ENCODE measurements at regions of chr1 and their contacts with region 1.

Region 1: GRCh38 chr1:89757532-89757931 is 63.3 kb upstream of the LRRC8D start:
- DNase-seq: peak in 3 of 5 donors; percentile 31 to 59 (median 50)
- H3K4me3 ChIP-seq: peak overlapping the region; percentile 12
- H3K4me3 Mint-ChIP-seq: peak overlapping the region; percentile 42 to 83 (median 79)
- H3K27ac ChIP-seq: no peak overlapping the region
- H3K27ac Mint-ChIP-seq: peak overlapping the region; percentile 76 to 99 (median 91)
- H3K4me1 ChIP-seq: peaks cover 81% of the 10 kb centered on the region
- H3K4me1 Mint-ChIP-seq: peaks cover 82 to 90% (median 89%) of the 10 kb centered on the region in 3 donors
- H3K27me3 ChIP-seq: no peaks in the 10 kb centered on the region
- H3K27me3 Mint-ChIP-seq: no peaks in the 10 kb centered on the region

Region 2: GRCh38 chr1:89574621-89575020 is 182.9 kb before region 1 on chr1:
- CTCF ChIA-PET with region 1: no interaction called
- POLR2A ChIA-PET with region 1: no interaction called
- DNase-seq: no peak
- H3K4me3 ChIP-seq: no peak overlapping the region
- H3K4me3 Mint-ChIP-seq: no peak overlapping the region
- H3K27ac ChIP-seq: no peak overlapping the region
- H3K27ac Mint-ChIP-seq: no peak overlapping the region
- H3K4me1 ChIP-seq: no peaks in the 10 kb centered on the region
- H3K4me1 Mint-ChIP-seq: peaks cover 2 to 9% (median 6%) of the 10 kb centered on the region in 3 donors
- H3K27me3 ChIP-seq: no peaks in the 10 kb centered on the region
- H3K27me3 Mint-ChIP-seq: no peaks in the 10 kb centered on the region

Region 3: GRCh38 chr1:89719502-89720306 is 37.8 kb before region 1 on chr1:
- CTCF ChIA-PET with region 1: interaction called, 61 read pairs
- POLR2A ChIA-PET with region 1: interaction called, 7 read pairs
- DNase-seq: peak in 1 of 5 donors; percentile 43
- H3K4me3 ChIP-seq: no peak overlapping the region
- H3K4me3 Mint-ChIP-seq: peak overlapping the region; percentile 43 to 76 (median 68)
- H3K27ac ChIP-seq: peak overlapping the region; percentile 28
- H3K27ac Mint-ChIP-seq: peak overlapping the region; percentile 68 to 97 (median 93)
- H3K4me1 ChIP-seq: peaks cover 53% of the 10 kb centered on the region
- H3K4me1 Mint-ChIP-seq: peaks cover 77 to 94% (median 94%) of the 10 kb centered on the region in 3 donors
- H3K27me3 ChIP-seq: no peaks in the 10 kb centered on the region
- H3K27me3 Mint-ChIP-seq: no peaks in the 10 kb centered on the region

Measured in CD8-positive, alpha-beta memory T cell (primary cell).